ENCODE measurements at regions of chr5 and their contacts with region 1.

Region 1: GRCh38 chr5:67724412-67725135 is 491.0 kb upstream of the PIK3R1 start:
- DNase-seq: no peak
- H3K4me3 ChIP-seq: no peak overlapping the region
- H3K27ac ChIP-seq: peak overlapping the region; percentile 73 to 77 (median 76)
- H3K4me1 ChIP-seq: peaks cover 0 to 25% (median 19%) of the 10 kb centered on the region in 4 donors
- H3K27me3 ChIP-seq: no peaks in the 10 kb centered on the region
- CTCF ChIP-seq: no peak
- EP300 ChIP-seq: no peak
- POLR2A ChIP-seq: no peak

Region 2: DNA sequence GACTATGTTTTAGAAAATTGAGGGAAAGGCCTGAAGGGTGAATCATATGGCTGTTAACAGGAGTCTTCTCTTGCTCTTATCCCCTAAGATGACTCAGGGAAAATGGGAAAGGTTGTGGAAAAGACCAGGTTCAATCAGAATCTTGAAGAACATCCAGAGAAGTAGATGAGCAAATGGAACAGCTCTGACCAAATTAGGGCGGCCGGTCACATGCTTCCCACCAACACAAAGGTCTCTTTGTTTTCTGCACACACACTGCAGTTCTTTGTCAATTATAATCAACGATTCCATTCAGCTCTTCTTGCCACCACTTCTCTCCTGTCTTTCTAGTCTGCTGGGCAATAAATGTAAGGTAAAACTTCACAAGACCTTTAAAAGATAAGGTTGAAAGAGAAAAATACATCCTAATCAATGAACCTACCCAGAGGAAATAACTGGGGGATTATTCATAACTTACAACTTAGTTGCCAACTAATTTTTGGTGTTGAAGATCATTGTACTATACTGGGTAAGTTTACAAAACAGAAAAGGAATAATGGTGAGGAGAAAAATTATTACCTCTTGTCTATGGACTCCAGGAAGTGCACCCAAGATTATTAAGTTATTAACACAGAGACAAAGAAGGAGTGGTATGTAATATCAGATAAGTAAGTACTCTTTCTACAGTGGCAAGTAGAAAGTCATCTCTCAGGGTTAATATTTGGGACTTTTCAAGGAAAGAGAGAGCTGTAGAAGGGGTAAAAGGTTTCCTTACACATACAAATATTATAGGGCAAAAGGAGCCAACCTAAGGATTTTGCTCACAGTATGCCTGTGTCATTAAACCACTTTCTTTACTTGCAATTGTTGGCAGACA is 49.1 kb after region 1 on chr5:
- intact Hi-C with region 1: loop called (anchors 10 kb)
- DNase-seq: peak; percentile 69
- H3K4me3 ChIP-seq: no peak overlapping the region
- H3K27ac ChIP-seq: peak overlapping the region in 3 of 4 donors; percentile 2 to 23 (median 9)
- H3K4me1 ChIP-seq: peaks cover 0 to 14% (median 9%) of the 10 kb centered on the region in 4 donors
- H3K27me3 ChIP-seq: no peaks in the 10 kb centered on the region
- CTCF ChIP-seq: no peak
- EP300 ChIP-seq: no peak
- POLR2A ChIP-seq: no peak